ENCODE measurements at regions of chr1 and their contacts with region 1.

Region 1: GRCh38 chr1:119367427-119368124 is 1.0 kb upstream of the HAO2 start:
- DNase-seq: no peak
- H3K4me3 ChIP-seq: no peak overlapping the region
- H3K27ac ChIP-seq: no peak overlapping the region
- H3K27me3 ChIP-seq: no peaks in the 10 kb centered on the region
- CTCF ChIP-seq: peak; percentile 51 to 87 (median 71)

Region 2: GRCh38 chr1:119275145-119276134 is 92.1 kb before region 1 on chr1:
- intact Hi-C with region 1: loop called in 1 of 2 experiments (anchors 5 kb)
- DNase-seq: peak in 1 of 10 donors; percentile 15
- H3K4me3 ChIP-seq: no peak overlapping the region
- H3K27ac ChIP-seq: no peak overlapping the region
- H3K27me3 ChIP-seq: no peaks in the 10 kb centered on the region
- CTCF ChIP-seq: peak; percentile 42 to 77 (median 64)

Measured in dorsolateral prefrontal cortex (tissue), 120 donors.